ENCODE measurements at regions of chr4 and their contacts with region 1.

Region 1: GRCh38 chr4:35286434-35286833 is 957.9 kb downstream of the ARAP2 start:
- DNase-seq: no peak
- H3K4me3 ChIP-seq: no peak overlapping the region
- H3K27ac ChIP-seq: no peak overlapping the region
- H3K4me1 ChIP-seq: no peaks in the 10 kb centered on the region
- H3K27me3 ChIP-seq: no peaks in the 10 kb centered on the region
- CTCF ChIP-seq: no peak

Region 2: DNA sequence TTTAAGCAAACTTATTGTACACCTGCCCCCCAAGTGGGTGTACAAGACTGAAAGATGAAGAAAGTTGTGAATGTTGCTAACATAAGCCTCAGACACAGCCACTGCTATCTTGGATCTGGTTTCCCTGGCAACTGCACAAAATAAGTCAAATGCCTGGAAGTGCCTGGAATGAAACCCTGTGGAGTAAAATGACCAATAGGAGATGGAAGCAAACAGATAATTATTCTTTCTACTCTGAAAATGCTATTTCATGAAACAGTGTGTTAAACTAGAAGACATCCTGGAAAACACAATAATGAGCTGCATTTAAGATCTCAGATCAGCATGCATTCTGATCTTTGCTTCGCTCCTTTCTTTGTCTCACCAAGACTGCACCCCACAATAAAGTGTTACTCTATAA is 58.1 kb before region 1 on chr4:
- intact Hi-C with region 1: loop called (anchors 2 kb)
- DNase-seq: no peak
- H3K4me3 ChIP-seq: no peak overlapping the region
- H3K27ac ChIP-seq: no peak overlapping the region
- H3K4me1 ChIP-seq: no peaks in the 10 kb centered on the region
- H3K27me3 ChIP-seq: no peaks in the 10 kb centered on the region
- CTCF ChIP-seq: no peak